Dendritic cell treated with granulocyte-macrophage colony-stimulating factor and Interleukin-4, amounts not matched to agents 40 ng/mL and 50 ng/mL, for 4 days (primary cell): ENCODE measurements at regions of chr3 and their contacts with region 1.

Region 1: DNA sequence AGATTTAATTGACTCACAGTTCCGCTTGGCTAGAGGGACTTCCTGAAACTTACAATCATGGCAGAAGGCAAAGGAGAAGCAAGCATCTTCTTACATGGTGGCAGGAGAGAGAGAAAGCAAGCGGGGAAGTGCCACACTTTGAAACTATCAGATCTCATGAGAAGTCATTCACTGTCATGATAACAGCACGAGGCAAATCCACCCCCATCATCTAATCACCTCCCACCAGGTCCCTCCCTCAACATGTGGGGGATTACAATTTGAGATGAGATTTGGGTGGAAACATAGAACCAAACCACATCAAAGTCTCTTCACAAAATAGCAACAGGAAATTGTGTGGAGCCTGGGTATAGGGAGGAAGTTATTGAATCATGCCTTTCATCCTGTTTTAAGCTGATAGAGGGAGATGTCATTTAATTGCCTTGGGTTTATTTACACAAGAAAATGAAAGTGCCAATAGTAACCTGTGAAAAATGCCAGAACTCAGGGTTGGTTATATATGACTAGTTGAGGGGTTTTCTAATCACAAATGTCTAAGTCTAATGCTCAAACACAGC is 624.8 kb upstream of the LMCD1 start:
- H3K4me3 Mint-ChIP-seq: no peak overlapping the region
- H3K27ac Mint-ChIP-seq: peak overlapping the region; percentile 60
- H3K4me1 Mint-ChIP-seq: peaks cover 10% of the 10 kb centered on the region
- H3K27me3 Mint-ChIP-seq: no peaks in the 10 kb centered on the region

Region 2: GRCh38 chr3:7640787-7641186 is 236.0 kb before region 1 on chr3:
- intact Hi-C with region 1: loop called (anchors 10 kb)
- H3K4me3 Mint-ChIP-seq: no peak overlapping the region
- H3K27ac Mint-ChIP-seq: no peak overlapping the region
- H3K4me1 Mint-ChIP-seq: peaks cover 5% of the 10 kb centered on the region
- H3K27me3 Mint-ChIP-seq: no peaks in the 10 kb centered on the region